CD4-positive, alpha-beta memory T cell (primary cell): ENCODE measurements at regions of chr1 and their contacts with region 1.

Region 1: GRCh38 chr1:45490626-45491486 is at the start of gene TESK2:
- DNase-seq: peak; percentile 97 to 100 (median 99)
- H3K4me3 ChIP-seq: peak within 1 kb of the TSS; percentile 71 to 79
- H3K4me3 Mint-ChIP-seq: no peak within 1 kb of the TSS
- H3K27ac ChIP-seq: peak within 1 kb of the TSS; percentile 68
- H3K27ac Mint-ChIP-seq: no peak within 1 kb of the TSS
- H3K4me1 ChIP-seq: peaks cover 22% of the 10 kb centered on the region
- H3K4me1 Mint-ChIP-seq: peaks cover 5 to 13% (median 10%) of the 10 kb centered on the region in 4 donors
- H3K27me3 ChIP-seq: no peaks in the 10 kb centered on the region
- H3K27me3 Mint-ChIP-seq: no peaks in the 10 kb centered on the region
- total RNA-seq, gene TESK2: 7.5 to 7.7 TPM

Region 2: GRCh38 chr1:44786138-44786840 is 704.6 kb before region 1 on chr1:
- CTCF ChIA-PET with region 1: no interaction called
- POLR2A ChIA-PET with region 1: no interaction called
- intact Hi-C with region 1: loop called (anchors 5 kb)
- DNase-seq: peak; percentile 72 to 84 (median 80)
- H3K4me3 ChIP-seq: peak overlapping the region; percentile 52 to 68
- H3K4me3 Mint-ChIP-seq: peak overlapping the region; percentile 73 to 83 (median 80)
- H3K27ac ChIP-seq: peak overlapping the region; percentile 53
- H3K27ac Mint-ChIP-seq: peak overlapping the region; percentile 41 to 95 (median 88)
- H3K4me1 ChIP-seq: peaks cover 39% of the 10 kb centered on the region
- H3K4me1 Mint-ChIP-seq: peaks cover 22 to 37% (median 28%) of the 10 kb centered on the region in 4 donors
- H3K27me3 ChIP-seq: no peaks in the 10 kb centered on the region
- H3K27me3 Mint-ChIP-seq: no peaks in the 10 kb centered on the region

Region 3: DNA sequence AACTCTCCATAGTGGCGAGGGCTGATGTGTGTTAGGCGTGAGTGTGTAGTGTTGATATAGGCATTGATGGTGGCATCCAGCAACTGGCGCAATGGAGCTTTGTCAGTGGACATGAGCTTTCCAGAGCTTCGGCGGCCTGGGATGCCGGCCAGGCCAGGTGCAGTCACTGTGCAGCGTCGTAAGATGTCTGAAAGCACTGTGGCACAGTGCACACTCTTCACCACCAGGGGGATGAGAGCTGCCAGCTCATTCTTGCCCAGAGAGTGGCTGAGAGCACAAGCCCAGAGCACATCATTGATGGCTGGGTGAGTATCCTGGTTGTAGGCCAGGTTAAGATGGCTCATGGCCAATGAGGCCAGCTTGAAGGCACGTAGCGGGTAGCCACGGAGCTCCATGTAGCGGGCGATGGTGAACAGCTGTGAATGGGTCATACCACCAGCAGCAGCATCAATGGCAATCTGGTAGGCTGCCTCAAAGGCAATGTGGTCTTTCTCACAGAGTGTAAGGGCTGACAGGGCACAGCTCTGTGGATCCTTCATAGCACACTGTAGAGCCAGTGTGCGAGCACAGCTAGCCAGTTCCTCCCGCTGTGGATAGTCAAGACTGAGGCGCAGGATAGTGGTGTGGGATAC is 472.1 kb before region 1 on chr1:
- CTCF ChIA-PET with region 1: interaction called, 122 read pairs
- POLR2A ChIA-PET with region 1: interaction called, 16 read pairs
- intact Hi-C with region 1: no loop called
- DNase-seq: peak; percentile 49 to 66 (median 56)
- H3K4me3 ChIP-seq: no peak overlapping the region
- H3K4me3 Mint-ChIP-seq: no peak overlapping the region
- H3K27ac ChIP-seq: no peak overlapping the region
- H3K27ac Mint-ChIP-seq: peak overlapping the region; percentile 4 to 80 (median 70)
- H3K4me1 ChIP-seq: no peaks in the 10 kb centered on the region
- H3K4me1 Mint-ChIP-seq: peaks cover 9 to 18% (median 10%) of the 10 kb centered on the region in 4 donors
- H3K27me3 ChIP-seq: no peaks in the 10 kb centered on the region
- H3K27me3 Mint-ChIP-seq: no peaks in the 10 kb centered on the region

Region 4: GRCh38 chr1:45365051-45365450 is 125.8 kb before region 1 on chr1:
- CTCF ChIA-PET with region 1: interaction called, 159 read pairs
- POLR2A ChIA-PET with region 1: interaction called, 5 read pairs
- intact Hi-C with region 1: loop called (anchors 1 kb)
- DNase-seq: no peak
- H3K4me3 ChIP-seq: no peak overlapping the region
- H3K4me3 Mint-ChIP-seq: no peak overlapping the region
- H3K27ac ChIP-seq: no peak overlapping the region
- H3K27ac Mint-ChIP-seq: no peak overlapping the region
- H3K4me1 ChIP-seq: peaks cover 1% of the 10 kb centered on the region
- H3K4me1 Mint-ChIP-seq: peaks cover under 1 to 4% (median 1%) of the 10 kb centered on the region in 4 donors
- H3K27me3 ChIP-seq: no peaks in the 10 kb centered on the region
- H3K27me3 Mint-ChIP-seq: no peaks in the 10 kb centered on the region

Region 5: DNA sequence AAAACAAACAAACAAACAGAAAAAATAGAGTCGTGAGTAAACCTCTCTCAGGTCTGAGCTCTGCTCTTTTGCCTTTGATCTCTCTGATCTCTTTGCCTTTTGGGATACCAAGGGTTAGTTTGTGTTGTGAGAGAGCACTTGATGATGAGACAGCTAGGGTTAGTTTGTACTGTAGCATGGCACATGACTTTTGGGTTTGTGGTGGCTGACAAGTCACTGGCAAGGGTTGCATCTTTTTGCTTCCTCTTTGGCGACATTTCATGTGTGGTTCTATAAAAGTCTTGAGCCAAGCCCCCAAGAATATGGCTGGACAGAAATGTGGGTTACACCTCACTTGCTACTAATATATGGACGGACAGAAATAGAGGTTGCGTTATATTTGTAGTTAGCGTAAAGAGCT is 60.4 kb before region 1 on chr1:
- CTCF ChIA-PET with region 1: no interaction called
- POLR2A ChIA-PET with region 1: no interaction called
- intact Hi-C with region 1: no loop called
- DNase-seq: no peak
- H3K4me3 ChIP-seq: no peak overlapping the region
- H3K4me3 Mint-ChIP-seq: no peak overlapping the region
- H3K27ac ChIP-seq: no peak overlapping the region
- H3K27ac Mint-ChIP-seq: no peak overlapping the region
- H3K4me1 ChIP-seq: no peaks in the 10 kb centered on the region
- H3K4me1 Mint-ChIP-seq: no peaks in the 10 kb centered on the region
- H3K27me3 ChIP-seq: no peaks in the 10 kb centered on the region
- H3K27me3 Mint-ChIP-seq: no peaks in the 10 kb centered on the region

Region 6: GRCh38 chr1:45569962-45570581 is 79.2 kb after region 1 on chr1:
- CTCF ChIA-PET with region 1: interaction called, 25 read pairs
- POLR2A ChIA-PET with region 1: no interaction called
- intact Hi-C with region 1: no loop called
- DNase-seq: peak; percentile 67 to 73 (median 72)
- H3K4me3 ChIP-seq: no peak overlapping the region
- H3K4me3 Mint-ChIP-seq: no peak overlapping the region
- H3K27ac ChIP-seq: no peak overlapping the region
- H3K27ac Mint-ChIP-seq: peak overlapping the region in 6 of 7 donors; percentile 28 to 88 (median 54)
- H3K4me1 ChIP-seq: no peaks in the 10 kb centered on the region
- H3K4me1 Mint-ChIP-seq: peaks cover 0 to 3% (median 0%) of the 10 kb centered on the region in 4 donors
- H3K27me3 ChIP-seq: no peaks in the 10 kb centered on the region
- H3K27me3 Mint-ChIP-seq: no peaks in the 10 kb centered on the region